ENCODE measurements at regions of chr1 and their contacts with region 1.

Region 1: GRCh38 chr1:48688102-48688760 is 88.5 kb downstream of the BEND5 start:
- DNase-seq: no peak
- ATAC-seq: no peak
- H3K4me3 ChIP-seq: no peak overlapping the region
- H3K27ac ChIP-seq: no peak overlapping the region
- H3K4me1 ChIP-seq: no peaks in the 10 kb centered on the region
- H3K27me3 ChIP-seq: peaks cover 0 to 14% (median under 1%) of the 10 kb centered on the region in 9 donors
- CTCF ChIP-seq: no peak
- POLR2A ChIP-seq: no peak

Region 2: GRCh38 chr1:48493970-48494769 is 194.1 kb before region 1 on chr1:
- intact Hi-C with region 1: no loop called
- DNase-seq: no peak
- ATAC-seq: peak in 2 of 4 donors; percentile 34 to 57
- H3K4me3 ChIP-seq: no peak overlapping the region
- H3K27ac ChIP-seq: peak overlapping the region in 1 of 12 donors; percentile 37
- H3K4me1 ChIP-seq: peaks cover 0 to 11% (median 4%) of the 10 kb centered on the region in 12 donors
- H3K27me3 ChIP-seq: no peaks in the 10 kb centered on the region
- CTCF ChIP-seq: no peak
- POLR2A ChIP-seq: no peak

Region 3: DNA sequence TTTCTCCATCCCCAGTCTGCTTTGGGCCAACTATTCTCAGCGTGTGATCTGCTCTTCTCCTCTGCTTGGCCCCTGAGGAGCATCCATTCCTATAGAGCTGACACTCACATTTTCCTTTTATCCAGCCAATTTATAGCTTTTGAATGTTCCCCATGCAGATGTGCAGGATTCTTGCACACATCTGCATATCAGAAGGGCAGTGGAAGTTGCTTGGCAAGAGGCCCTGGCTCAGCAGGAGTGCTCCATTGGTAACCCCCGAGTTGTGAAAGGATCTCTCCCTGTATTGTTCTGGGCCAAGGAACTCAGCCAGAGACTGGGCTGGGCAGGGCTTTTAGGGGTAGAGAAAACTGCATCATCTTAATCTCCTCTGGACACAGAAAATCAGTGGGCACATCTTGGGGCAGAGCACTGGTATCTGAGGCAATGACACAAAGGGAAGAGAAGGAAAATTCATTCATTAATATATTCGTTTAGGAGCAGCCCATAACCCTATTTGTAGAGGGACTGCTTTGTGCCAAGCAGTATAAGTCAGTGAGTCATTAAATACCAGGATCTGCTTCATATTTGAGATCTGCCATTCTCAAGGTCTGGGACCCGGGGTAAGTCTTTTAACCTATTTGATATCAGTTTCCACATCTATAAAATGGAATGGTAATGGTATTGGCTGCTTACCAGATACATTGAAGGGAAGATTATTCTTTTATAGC is 119.5 kb after region 1 on chr1:
- intact Hi-C with region 1: loop called in 2 of 10 experiments (anchors 10 kb)
- DNase-seq: no peak
- ATAC-seq: no peak
- H3K4me3 ChIP-seq: no peak overlapping the region
- H3K27ac ChIP-seq: no peak overlapping the region
- H3K4me1 ChIP-seq: no peaks in the 10 kb centered on the region
- H3K27me3 ChIP-seq: peaks cover 0 to 3% (median 0%) of the 10 kb centered on the region in 9 donors
- CTCF ChIP-seq: no peak
- POLR2A ChIP-seq: no peak